Sciatic nerve (tissue), 2 donors: ENCODE measurements at regions of chr10 and their contacts with region 1.

Region 1: DNA sequence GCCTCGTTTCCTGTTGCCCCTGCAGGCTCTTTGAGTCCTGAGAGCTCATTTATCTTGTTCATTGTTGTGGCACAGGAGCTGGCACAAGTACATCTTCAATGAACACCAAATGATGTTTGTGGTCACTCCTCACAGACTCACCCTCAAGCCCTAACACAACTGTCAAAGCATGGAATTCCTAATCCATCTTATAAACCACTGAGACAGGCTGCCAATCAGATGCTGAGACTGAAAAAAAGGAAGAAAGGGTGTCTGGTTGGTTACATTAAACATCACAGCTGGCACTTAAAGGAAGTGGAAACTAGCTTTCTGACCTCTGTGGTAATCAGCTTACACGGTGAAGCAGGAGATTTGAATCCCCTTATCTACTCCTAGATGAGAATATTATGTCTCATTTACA is 7.7 kb upstream of the CCDC172 start:
- DNase-seq: no peak
- ATAC-seq: no peak

Region 2: DNA sequence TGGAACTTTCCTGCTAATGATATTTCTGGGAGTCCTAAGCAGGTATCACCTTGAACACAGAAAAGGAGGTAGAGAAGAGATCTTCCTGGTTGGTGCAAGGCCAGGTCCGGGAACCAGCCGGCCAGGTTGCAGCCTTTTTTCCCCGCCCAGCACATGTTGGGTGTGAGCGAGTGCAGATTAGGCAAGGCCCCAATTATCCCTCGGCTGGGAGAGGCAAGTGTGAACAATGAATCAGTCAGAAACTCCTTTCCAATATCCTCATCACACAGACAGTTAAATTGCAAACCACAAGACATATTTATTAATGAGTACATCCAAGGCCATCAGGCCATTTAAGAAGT is 1797.3 kb before region 1 on chr10:
- intact Hi-C with region 1: loop called (anchors 5 kb)
- DNase-seq: no peak
- ATAC-seq: peak; percentile 42

Region 3: DNA sequence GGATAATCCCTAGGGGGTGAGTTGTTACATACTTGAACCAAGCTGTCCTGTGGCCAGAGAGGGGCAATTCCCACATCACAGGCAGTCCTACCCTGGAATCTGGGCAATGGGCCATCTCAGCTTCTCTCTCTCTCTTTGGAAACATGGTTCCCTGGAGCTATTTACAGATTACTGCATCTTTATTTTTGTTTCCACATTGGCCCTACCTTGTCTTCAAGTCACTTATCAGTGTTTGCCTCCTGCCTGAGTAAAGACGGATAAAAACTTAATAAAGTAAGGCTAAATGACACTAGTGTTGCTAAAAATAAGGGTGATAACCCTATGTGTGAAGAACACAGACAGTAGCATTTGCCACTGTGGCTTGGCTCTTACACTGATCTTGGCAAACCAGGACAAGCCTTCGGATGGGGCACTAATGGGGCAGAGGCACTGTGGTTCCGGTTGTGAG is 271.7 kb before region 1 on chr10:
- intact Hi-C with region 1: no loop called
- DNase-seq: no peak
- ATAC-seq: peak; percentile 88